ENCODE measurements at regions of chr11 and their contacts with region 1.

Region 1: DNA sequence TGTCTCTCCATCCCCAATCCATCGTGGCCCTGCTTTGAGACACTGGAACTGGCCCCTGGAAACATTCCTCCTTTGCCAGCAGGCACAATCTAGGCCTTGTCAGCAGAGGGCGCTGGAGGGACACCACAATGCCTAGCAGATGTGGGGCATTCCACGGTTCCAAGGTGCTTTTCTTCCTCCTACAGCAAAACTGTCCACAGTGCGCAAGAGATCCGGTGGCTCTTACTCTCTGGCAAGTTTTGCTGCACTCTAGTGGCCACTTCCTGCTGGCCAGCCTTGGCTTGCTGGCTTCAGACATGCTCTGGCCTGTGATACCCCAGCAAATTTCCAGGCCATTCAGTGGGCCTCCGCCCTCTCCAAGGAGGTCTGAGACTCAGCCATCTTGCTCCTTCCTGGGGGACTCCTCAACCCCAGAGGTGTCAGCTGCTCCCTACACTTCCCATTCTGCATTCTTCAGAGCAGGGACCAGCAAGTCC is 17.1 kb upstream of the RBM4B start:
- DNase-seq: peak; percentile 95
- H3K4me3 Mint-ChIP-seq: no peak overlapping the region
- H3K27ac Mint-ChIP-seq: no peak overlapping the region
- H3K4me1 Mint-ChIP-seq: no peaks in the 10 kb centered on the region
- H3K27me3 Mint-ChIP-seq: no peaks in the 10 kb centered on the region

Region 2: GRCh38 chr11:66744485-66745340 is 49.9 kb after region 1 on chr11:
- CTCF ChIA-PET with region 1: no interaction called
- intact Hi-C with region 1: loop called (anchors 2 kb)
- DNase-seq: peak; percentile 85
- H3K4me3 Mint-ChIP-seq: peak overlapping the region; percentile 95
- H3K27ac Mint-ChIP-seq: peak overlapping the region; percentile 50
- H3K4me1 Mint-ChIP-seq: peaks cover 1% of the 10 kb centered on the region
- H3K27me3 Mint-ChIP-seq: no peaks in the 10 kb centered on the region

Region 3: DNA sequence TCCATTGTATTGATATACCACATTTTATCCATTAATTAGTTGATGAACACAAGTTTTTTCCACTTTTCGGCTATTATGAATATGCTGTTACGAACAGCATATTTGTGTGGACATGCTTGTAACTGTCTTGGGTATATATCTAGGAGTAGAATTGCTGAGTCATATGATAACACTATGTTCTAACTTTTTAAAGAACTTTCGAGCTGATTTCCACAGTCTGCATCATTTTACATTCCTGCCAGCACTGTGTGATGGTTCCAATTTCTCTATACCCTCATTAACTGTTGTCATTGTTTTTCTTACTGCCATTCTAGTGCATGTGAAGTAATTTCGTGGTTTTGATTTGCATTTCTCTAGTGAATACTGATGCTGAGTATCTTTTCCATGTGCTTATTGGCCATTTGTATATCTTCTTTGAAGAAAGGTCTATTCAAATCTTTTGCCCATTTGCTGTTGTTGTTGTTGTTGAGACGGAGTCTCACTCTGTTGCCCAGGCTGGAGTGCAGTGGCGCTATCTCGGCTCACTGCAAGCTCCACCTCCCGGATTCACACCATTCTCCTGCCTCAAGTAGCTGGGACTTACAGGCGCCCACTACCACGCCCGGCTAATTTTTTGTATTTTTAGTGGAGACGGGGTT is 141.1 kb after region 1 on chr11:
- CTCF ChIA-PET with region 1: interaction called, 35 read pairs
- intact Hi-C with region 1: loop called (anchors 1 kb)
- DNase-seq: no peak
- H3K4me3 Mint-ChIP-seq: no peak overlapping the region
- H3K27ac Mint-ChIP-seq: peak overlapping the region; percentile 1
- H3K4me1 Mint-ChIP-seq: peaks cover 19% of the 10 kb centered on the region
- H3K27me3 Mint-ChIP-seq: no peaks in the 10 kb centered on the region

Region 4: DNA sequence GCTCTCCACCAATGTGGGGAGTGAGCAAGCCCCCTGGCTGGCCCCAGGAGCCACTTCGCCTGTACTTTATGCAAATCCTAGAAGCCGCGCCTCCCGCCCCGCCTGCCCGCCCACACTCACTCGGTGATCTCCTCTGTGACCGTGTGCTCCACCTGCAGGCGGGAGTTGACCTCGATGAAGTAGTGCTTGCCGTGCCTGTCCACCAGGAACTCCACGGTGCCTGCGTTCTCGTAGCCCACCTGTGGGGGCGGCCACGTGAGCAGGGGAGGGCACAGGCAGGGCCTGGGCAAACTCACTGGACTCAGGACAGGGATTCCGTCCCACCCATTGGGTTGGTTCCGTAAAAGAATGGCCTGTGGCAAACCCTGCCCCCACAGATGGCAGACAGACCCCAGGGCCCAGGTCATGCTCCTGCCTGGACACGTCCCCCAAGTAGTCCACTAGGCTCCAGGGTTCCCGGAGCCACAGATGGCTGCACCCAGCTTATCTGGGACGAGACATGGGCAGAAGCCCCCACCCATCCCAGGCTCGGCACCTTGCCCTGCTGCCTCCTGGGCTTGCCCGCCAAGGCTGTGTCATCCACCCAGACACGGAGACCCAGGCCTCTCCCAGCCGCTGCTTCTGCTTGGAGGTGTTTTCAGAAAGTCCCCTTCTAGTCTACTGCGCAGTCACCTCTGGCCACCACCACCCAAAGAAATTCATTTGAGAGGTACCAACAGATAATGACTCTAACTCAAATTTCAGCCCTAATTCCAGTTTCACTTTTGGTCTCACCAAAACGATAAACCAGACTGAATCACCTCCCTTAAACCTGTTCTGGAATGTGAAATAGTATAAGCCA is 174.2 kb after region 1 on chr11:
- CTCF ChIA-PET with region 1: no interaction called
- intact Hi-C with region 1: loop called (anchors 1 kb)
- DNase-seq: peak; percentile 91
- H3K4me3 Mint-ChIP-seq: no peak overlapping the region
- H3K27ac Mint-ChIP-seq: no peak overlapping the region
- H3K4me1 Mint-ChIP-seq: peaks cover 7% of the 10 kb centered on the region
- H3K27me3 Mint-ChIP-seq: no peaks in the 10 kb centered on the region

Region 5: DNA sequence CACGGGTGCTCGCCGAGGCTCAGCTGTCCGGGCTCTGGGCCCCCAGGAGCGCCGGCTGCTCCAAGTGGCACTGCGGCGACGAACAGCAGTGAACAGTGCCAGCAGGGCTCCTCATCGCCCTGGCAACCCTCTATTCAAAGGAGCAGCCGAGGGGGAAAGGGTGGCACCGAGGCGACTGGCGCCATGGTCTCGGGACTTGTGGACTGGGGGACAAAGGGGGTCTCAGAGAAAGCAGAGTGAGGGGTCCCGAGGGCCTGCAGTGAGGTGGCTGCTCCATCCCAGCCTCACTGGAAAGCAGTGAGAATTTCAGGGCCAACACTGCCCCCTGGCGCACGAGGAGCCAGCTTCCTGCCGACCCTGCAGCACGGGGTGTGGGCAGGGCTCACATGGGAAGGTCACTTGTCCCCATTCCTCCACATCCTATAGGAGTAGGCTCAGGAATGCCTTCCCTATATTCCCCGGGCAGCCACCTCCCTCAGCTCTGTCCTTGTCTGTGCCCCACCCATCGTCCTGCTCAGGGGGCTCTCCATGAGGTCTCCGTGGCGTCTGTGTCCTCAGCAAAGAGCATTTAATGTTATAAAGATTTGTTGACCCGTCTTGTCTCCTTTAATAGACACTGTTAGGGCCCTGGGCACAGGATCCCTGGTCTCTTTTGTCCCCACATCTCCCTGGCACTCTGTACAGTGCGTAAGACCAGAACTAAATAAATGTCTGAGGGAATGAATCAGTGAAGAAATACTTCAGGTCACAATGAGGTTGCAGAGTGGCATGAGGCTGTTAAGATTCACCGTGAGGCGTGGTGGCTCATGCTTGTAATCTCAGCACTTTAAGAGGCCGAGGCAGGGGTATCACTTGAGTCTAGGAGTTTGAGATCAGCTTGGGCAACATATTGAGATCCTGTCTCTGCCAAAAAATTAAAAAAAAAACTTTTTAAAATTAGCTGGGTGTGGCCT is 188.5 kb after region 1 on chr11:
- CTCF ChIA-PET with region 1: interaction called, 4 read pairs
- intact Hi-C with region 1: loop called (anchors 2 kb)
- DNase-seq: peak; percentile 79
- H3K4me3 Mint-ChIP-seq: no peak overlapping the region
- H3K27ac Mint-ChIP-seq: no peak overlapping the region
- H3K4me1 Mint-ChIP-seq: peaks cover 16% of the 10 kb centered on the region
- H3K27me3 Mint-ChIP-seq: no peaks in the 10 kb centered on the region

Region 6: GRCh38 chr11:66976048-66976467 is 281.3 kb after region 1 on chr11:
- CTCF ChIA-PET with region 1: no interaction called
- intact Hi-C with region 1: loop called (anchors 1 kb)
- DNase-seq: peak; percentile 30
- H3K4me3 Mint-ChIP-seq: no peak overlapping the region
- H3K27ac Mint-ChIP-seq: no peak overlapping the region
- H3K4me1 Mint-ChIP-seq: peaks cover under 1% of the 10 kb centered on the region
- H3K27me3 Mint-ChIP-seq: no peaks in the 10 kb centered on the region

Region 7: DNA sequence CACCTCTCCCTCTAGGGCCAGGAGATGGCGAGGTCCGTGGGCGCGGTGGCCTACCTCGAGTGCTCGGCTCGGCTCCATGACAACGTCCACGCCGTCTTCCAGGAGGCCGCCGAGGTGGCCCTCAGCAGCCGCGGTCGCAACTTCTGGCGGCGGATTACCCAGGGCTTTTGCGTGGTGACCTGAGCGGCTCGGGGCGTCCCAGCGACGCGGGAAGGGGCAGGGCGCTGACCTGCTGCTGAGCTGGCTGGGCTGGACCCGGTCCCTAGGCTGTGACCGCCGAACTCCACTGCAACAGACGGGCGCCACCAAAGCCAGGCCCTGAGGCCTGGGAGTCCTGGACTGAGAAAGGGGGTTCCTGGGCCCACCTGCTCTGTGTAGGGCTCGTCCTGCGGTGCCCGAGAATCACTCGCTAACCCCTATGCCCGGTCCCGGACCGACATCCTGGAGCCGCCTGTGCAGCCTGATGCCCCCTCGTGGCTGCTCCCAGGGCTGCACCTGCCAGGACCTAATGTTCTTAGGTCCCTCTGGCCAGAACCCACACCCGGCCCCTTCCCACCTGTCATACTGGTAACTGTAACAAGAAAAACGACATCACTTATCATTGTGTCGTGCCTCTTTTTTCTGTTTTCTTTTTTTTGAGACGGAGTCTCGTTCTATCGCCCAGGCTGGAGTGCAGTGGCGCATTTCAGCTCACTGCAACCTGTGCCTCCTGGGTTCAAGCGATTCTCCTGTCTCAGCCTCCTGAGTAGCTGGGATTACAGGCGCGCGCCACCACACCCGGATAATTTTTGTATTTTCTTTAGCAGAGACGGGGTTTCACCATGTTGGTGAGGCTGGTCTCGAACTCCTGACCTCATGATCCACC is 376.9 kb after region 1 on chr11:
- CTCF ChIA-PET with region 1: no interaction called
- intact Hi-C with region 1: loop called (anchors 1 kb)
- DNase-seq: peak; percentile 85
- H3K4me3 Mint-ChIP-seq: no peak overlapping the region
- H3K27ac Mint-ChIP-seq: no peak overlapping the region
- H3K4me1 Mint-ChIP-seq: peaks cover 5% of the 10 kb centered on the region
- H3K27me3 Mint-ChIP-seq: no peaks in the 10 kb centered on the region